Breast epithelium (tissue), 4 donors: ENCODE measurements at regions of chr2 and their contacts with region 1.

Region 1: DNA sequence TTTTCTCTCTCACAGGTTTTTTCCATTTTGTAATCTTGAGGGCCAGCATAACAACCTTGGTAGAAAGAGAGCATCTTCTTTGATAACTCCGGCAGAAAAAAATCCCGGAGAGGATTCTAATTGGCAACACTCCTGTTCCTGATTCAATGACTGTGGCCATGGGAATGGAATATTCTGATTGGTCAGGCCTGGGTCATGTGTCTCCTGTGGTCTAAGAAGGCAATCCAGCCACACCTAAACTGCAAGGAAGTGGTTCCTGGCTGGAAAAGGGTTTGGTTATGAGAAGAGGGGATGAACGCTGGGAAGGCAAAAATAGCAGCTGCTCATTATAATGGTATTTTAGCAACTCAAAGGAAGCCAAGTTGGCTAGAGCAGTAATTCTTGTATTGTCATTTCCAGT is 24.8 kb upstream of the ZNF638 start:
- DNase-seq: no peak
- H3K4me3 ChIP-seq: no peak overlapping the region
- H3K27ac ChIP-seq: no peak overlapping the region
- H3K4me1 ChIP-seq: no peaks in the 10 kb centered on the region
- H3K27me3 ChIP-seq: no peaks in the 10 kb centered on the region
- CTCF ChIP-seq: no peak
- POLR2A ChIP-seq: no peak

Region 2: DNA sequence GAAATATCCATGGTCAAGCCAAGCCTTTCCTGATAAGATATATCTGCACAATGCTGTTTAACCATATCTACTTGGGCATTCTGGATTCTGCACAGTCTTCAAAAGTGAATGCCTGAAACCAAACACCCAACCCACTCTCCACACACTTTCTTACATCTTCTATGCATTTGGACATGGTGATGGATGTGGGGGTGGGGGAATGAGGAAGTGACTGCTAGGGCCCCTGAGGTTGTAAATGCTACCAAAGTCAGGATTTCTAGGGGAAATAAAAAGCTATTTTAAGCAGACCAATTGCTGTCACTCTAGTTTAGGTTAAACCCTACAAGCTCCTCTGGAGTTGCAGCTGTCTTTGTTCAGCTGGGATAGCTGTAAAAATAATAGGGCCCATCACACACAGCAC is 726.4 kb before region 1 on chr2:
- intact Hi-C with region 1: no loop called
- DNase-seq: no peak
- H3K4me3 ChIP-seq: no peak overlapping the region
- H3K27ac ChIP-seq: no peak overlapping the region
- H3K4me1 ChIP-seq: no peaks in the 10 kb centered on the region
- H3K27me3 ChIP-seq: no peaks in the 10 kb centered on the region
- CTCF ChIP-seq: no peak
- POLR2A ChIP-seq: no peak

Region 3: GRCh38 chr2:71379088-71379487 is 72.3 kb after region 1 on chr2:
- intact Hi-C with region 1: loop called (anchors 10 kb)
- DNase-seq: no peak
- H3K4me3 ChIP-seq: no peak overlapping the region
- H3K27ac ChIP-seq: no peak overlapping the region
- H3K4me1 ChIP-seq: no peaks in the 10 kb centered on the region
- H3K27me3 ChIP-seq: no peaks in the 10 kb centered on the region
- CTCF ChIP-seq: no peak
- POLR2A ChIP-seq: no peak